Right cardiac atrium (tissue), 5 donors: ENCODE measurements at regions of chr1 and their contacts with region 1.

Region 1: DNA sequence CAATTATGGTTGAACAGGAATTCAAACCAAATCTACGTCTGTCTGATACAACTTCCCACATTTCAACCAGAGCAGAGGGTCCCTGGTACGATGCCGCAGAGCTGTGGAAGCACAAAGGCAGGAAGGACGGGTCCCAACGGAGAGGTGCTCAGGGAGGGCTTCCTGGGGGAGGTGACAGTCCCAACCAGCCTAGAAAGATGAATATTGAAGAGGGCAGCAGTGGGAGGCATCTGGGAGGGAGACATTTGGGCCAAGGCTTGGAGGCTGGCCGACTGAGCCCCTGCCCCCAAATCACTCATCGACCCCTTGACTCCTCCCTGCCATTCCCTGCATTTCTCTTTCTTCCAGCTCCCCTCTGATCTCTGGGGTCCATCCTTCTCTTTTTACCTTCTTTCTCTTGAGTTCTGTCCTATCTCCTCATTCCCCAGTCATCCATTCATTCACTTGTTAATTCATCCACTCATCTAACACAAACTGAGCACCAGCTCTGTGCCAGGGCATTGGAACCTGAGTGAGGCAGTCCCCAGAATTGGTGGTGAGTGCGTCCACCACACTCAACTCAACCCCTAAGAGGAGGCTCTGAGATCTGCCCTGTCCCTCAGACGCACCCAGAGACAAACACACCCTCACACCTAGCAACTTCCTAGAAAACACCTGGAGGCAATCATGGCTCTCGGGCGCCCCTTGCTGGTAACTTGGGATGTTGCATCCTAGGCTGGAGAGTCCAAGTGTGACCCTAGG is 13.2 kb upstream of the CELA3B start:
- DNase-seq: peak; percentile 65 to 91 (median 87)
- ATAC-seq: peak; percentile 78 to 80
- H3K4me3 ChIP-seq: no peak overlapping the region
- H3K27ac ChIP-seq: no peak overlapping the region
- H3K4me1 ChIP-seq: peaks cover 1% of the 10 kb centered on the region
- H3K27me3 ChIP-seq: no peaks in the 10 kb centered on the region

Region 2: GRCh38 chr1:21841852-21842466 is 121.7 kb before region 1 on chr1:
- intact Hi-C with region 1: no loop called
- DNase-seq: peak in 1 of 3 donors; percentile 58
- ATAC-seq: peak in 1 of 2 donors; percentile 2
- H3K4me3 ChIP-seq: no peak overlapping the region
- H3K27ac ChIP-seq: no peak overlapping the region
- H3K4me1 ChIP-seq: no peaks in the 10 kb centered on the region
- H3K27me3 ChIP-seq: no peaks in the 10 kb centered on the region

Region 3: DNA sequence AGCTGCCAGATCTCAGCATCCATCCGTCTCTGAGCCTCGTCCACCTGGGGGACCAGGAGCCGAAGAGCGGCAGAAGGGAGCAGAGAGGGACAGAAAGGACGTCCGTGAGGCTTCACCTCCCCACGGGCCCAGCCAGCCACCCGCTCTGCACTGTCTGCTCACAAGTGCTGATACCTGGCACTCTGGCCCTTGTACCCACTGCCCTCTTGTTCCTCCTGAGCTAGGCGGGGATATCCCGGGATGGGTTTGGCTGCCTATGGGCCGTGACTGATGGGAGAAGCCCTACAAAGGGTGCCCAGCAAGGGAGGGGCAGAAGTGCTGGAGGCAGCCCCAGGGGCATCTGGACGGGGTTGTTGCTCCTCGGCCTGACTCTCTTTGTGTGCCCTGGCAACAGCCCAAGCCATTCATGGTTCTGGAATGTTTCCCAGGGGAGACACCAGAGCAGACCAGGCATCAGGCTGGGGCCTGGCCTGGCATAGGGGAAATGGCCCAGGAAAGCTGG is 94.0 kb before region 1 on chr1:
- intact Hi-C with region 1: loop called in 2 of 4 experiments (anchors 10 kb)
- DNase-seq: peak; percentile 84 to 91 (median 91)
- ATAC-seq: peak; percentile 59 to 63
- H3K4me3 ChIP-seq: no peak overlapping the region
- H3K27ac ChIP-seq: peak overlapping the region; percentile 42
- H3K4me1 ChIP-seq: no peaks in the 10 kb centered on the region
- H3K27me3 ChIP-seq: no peaks in the 10 kb centered on the region

Region 4: DNA sequence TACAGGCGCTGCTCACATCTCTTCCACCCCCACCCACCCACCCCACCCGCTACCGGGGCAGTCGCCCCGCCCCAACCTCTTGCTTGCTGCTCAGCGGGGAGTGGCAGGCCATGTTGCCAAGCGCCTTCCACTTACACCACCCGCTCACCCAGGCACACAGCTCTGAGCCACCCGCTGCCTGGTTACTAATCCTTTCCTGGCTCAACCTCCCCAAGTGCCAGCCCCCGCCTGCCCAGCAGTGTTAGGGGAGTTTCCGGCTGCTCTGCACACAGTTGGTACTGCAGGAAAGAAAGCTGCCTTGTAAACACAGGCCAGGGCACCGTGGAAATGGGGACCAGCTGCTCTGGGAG is 952.8 kb after region 1 on chr1:
- intact Hi-C with region 1: no loop called
- DNase-seq: no peak
- ATAC-seq: no peak
- H3K4me3 ChIP-seq: no peak overlapping the region
- H3K27ac ChIP-seq: no peak overlapping the region
- H3K4me1 ChIP-seq: no peaks in the 10 kb centered on the region
- H3K27me3 ChIP-seq: no peaks in the 10 kb centered on the region